ENCODE measurements at regions of chr19 and their contacts with region 1.

Region 1: GRCh38 chr19:12974301-12975220 is 5.2 kb downstream of the DAND5 start:
- DNase-seq: no peak
- H3K4me3 Mint-ChIP-seq: no peak overlapping the region
- H3K27ac Mint-ChIP-seq: no peak overlapping the region
- H3K4me1 Mint-ChIP-seq: peaks cover 7% of the 10 kb centered on the region
- H3K27me3 Mint-ChIP-seq: peaks cover 16% of the 10 kb centered on the region

Region 2: DNA sequence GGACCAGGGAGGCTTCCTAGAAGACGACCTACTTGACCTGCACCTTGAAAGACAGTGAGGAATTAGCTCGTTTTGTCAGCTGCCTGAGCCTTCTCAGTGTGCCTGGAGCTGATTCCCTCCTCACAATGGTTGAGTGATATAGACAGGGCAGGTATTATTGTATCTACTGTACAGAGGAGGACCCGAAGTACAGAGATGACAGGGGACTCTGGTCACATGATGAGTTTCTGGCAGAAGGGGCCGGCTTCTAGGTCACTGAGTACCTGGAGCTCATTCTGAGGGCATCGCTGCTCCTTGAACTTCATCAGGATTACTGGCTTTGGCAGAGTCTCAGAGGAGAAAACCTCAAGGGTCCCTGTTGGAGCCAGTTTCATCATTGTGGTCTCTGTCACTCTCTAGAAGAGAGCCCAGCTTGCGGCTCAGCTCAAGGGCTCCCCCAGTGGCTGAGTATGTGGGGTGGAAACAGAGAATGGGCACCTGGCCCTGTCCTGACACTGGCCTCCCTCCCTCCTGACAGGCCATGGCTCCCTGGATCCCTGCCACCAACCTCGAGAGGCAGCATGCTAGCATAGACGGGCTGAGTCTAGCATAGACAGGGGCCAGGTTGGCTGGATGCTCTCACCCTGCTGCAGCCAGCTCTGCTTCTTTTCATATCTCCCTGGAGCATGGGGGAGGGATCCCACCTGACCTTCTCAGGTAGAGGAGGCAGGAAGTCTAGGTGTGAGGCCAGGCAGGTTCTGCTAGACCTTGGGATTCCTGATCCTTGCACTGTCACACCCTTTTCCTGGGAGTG is 59.5 kb after region 1 on chr19:
- intact Hi-C with region 1: no loop called
- DNase-seq: no peak
- H3K4me3 Mint-ChIP-seq: no peak overlapping the region
- H3K27ac Mint-ChIP-seq: no peak overlapping the region
- H3K4me1 Mint-ChIP-seq: no peaks in the 10 kb centered on the region
- H3K27me3 Mint-ChIP-seq: peaks cover 9% of the 10 kb centered on the region

Region 3: GRCh38 chr19:13588957-13589833 is 614.6 kb after region 1 on chr19:
- intact Hi-C with region 1: loop called (anchors 5 kb)
- DNase-seq: peak; percentile 70
- H3K4me3 Mint-ChIP-seq: no peak overlapping the region
- H3K27ac Mint-ChIP-seq: no peak overlapping the region
- H3K4me1 Mint-ChIP-seq: no peaks in the 10 kb centered on the region
- H3K27me3 Mint-ChIP-seq: peaks cover 4% of the 10 kb centered on the region

Measured in activated T-helper 1 cell treated with anti-CD3 and anti-CD28 coated beads, Interleukin-12 subunit alpha, Interleukin-12 subunit beta, Interleukin-2, Interleukin-4 antibody, amounts not matched to agents 30 ng/mL and 10 ng/mL and 1 ng/mL, durations not matched to agents 14 hours and 24 hours and 36 hours (primary cell).